Heart right ventricle (tissue), 16 donors: ENCODE measurements at regions of chr6 and their contacts with region 1.

Region 1: GRCh38 chr6:89940225-89941027 is 46.2 kb downstream of the GJA10 start:
- DNase-seq: peak in 1 of 2 donors; percentile 67
- ATAC-seq: peak; percentile 82 to 95 (median 92)
- H3K4me3 ChIP-seq: no peak overlapping the region
- H3K27ac ChIP-seq: no peak overlapping the region
- H3K4me1 ChIP-seq: peaks cover 0 to 12% (median 0%) of the 10 kb centered on the region in 9 donors
- H3K27me3 ChIP-seq: no peaks in the 10 kb centered on the region
- CTCF ChIP-seq: peak; percentile 44 to 85 (median 72)

Region 2: GRCh38 chr6:90156861-90157260 is 216.4 kb after region 1 on chr6:
- intact Hi-C with region 1: no loop called
- DNase-seq: no peak
- ATAC-seq: no peak
- H3K4me3 ChIP-seq: no peak overlapping the region
- H3K27ac ChIP-seq: no peak overlapping the region
- H3K4me1 ChIP-seq: peaks cover 0 to 23% (median 18%) of the 10 kb centered on the region in 9 donors
- H3K27me3 ChIP-seq: no peaks in the 10 kb centered on the region
- CTCF ChIP-seq: no peak

Region 3: GRCh38 chr6:90467546-90467945 is 527.1 kb after region 1 on chr6:
- intact Hi-C with region 1: loop called in 1 of 10 experiments (anchors 1 kb)
- DNase-seq: no peak
- ATAC-seq: no peak
- H3K4me3 ChIP-seq: no peak overlapping the region
- H3K27ac ChIP-seq: no peak overlapping the region
- H3K4me1 ChIP-seq: no peaks in the 10 kb centered on the region
- H3K27me3 ChIP-seq: peaks cover 0 to 9% (median 0%) of the 10 kb centered on the region in 7 donors
- CTCF ChIP-seq: no peak